K562 (cell line): ENCODE measurements at regions of chr13 and their contacts with region 1.

Region 1: DNA sequence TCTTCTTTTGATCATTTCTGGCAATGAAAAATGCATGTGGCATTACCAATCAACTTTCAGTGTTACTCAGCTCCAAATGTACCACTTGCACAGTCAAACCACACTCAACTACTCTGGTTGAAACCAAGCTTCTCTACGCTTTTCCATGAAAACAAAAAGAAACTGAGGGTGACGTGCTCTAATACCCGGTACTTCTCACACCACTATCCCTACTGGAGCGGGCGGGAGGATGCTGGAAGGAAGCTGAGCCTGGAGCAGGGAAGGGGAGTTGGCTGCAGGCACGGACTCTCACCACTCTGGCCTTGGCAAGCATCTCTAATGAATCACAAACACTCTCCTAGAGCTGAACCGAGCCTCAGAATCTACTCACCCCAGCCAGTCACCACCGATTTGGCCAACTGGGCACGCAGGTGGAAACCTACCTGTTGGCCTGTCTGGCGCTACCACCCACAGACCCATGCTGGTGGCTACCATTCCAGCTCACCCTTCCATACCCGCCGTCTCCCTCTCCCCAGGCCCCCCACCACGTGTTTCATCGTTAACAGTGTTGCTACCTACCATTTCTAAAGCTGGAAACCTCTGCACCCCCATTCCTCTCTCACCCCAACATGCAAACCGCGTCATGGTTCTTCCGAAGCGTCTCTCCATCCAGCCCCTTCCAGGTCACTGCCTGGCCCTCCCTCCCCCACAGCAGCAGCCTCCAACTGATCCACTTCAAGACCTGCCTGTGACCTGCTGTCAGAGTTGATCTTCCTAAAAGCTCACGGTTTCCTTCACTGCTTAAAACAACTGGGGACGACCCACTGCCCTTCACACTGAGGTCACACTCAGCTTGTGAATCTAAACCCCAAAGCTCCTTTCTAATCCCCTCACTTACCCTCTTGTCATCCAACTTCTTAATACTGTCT is 48.0 kb downstream of the STK24 start:
- DNase-seq: no peak
- ATAC-seq: no peak
- H3K4me3 ChIP-seq: no peak overlapping the region
- H3K27ac ChIP-seq: no peak overlapping the region
- H3K4me1 ChIP-seq: peaks cover 0 to 15% of the 10 kb centered on the region in 2 experiments; a peak in 3 of 5 replicates
- H3K27me3 ChIP-seq: no peaks in the 10 kb centered on the region
- CTCF ChIP-seq: no peak
- EP300 ChIP-seq: no peak
- POLR2A ChIP-seq: no peak
- RAD21 ChIP-seq: no peak

Region 2: DNA sequence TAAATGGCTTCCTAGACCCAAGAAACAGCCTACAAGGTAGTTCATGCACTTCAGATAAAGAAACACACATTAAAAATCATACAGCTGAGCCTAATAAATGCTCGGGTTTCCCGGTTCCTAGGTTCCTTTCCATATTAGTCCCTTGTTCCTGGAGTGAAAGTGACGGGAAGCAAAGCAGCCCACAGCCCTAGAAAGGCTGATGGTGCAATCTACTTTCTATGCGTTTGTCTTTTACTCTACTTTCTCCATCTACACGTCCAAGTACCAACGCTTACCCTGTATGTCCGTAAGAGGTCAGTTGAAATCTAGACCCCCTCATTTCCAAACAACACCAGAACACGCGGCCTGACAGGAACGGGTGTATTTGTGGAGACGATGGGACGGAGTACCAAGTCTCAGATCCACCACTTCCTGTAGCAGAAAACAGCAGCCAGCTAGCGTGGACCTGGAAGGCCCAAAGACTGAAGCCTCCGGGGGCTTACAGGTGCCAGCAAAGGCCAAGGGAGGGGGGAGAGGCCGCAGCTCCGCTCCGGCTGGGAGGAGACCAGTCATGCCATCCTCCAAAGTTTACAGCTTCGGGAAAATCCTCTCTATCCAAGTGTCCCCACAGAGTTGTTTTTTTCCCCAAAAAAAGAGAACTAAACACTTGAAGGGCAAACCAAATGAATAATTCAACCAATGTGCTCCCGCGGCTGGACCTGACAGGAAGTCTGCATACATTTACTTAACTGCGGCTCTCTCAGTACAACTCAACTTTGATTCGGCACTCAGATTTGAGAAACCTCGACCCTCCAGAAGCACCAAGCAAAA is 13.9 kb after region 1 on chr13:
- CTCF ChIA-PET with region 1: no interaction called
- POLR2A ChIA-PET with region 1: interaction called, 13 read pairs
- in situ Hi-C with region 1: no loop called
- intact Hi-C with region 1: no loop called
- DNase-seq: no peak
- ATAC-seq: no peak
- H3K4me3 ChIP-seq: no peak overlapping the region
- H3K27ac ChIP-seq: no peak overlapping the region
- H3K4me1 ChIP-seq: peaks cover 10 to 29% of the 10 kb centered on the region in 2 experiments
- H3K27me3 ChIP-seq: no peaks in the 10 kb centered on the region
- CTCF ChIP-seq: no peak
- EP300 ChIP-seq: no peak
- POLR2A ChIP-seq: no peak
- RAD21 ChIP-seq: no peak

Region 3: GRCh38 chr13:99087096-99087953 is 558.4 kb after region 1 on chr13:
- CTCF ChIA-PET with region 1: no interaction called
- POLR2A ChIA-PET with region 1: no interaction called
- in situ Hi-C with region 1: no loop called
- intact Hi-C with region 1: no loop called
- DNase-seq: peak; percentile 90 to 96 (median 91)
- ATAC-seq: peak; percentile 95
- H3K4me3 ChIP-seq: peak overlapping the region; percentile 80
- H3K27ac ChIP-seq: peak overlapping the region; percentile 72
- H3K4me1 ChIP-seq: peaks cover 20 to 25% of the 10 kb centered on the region in 2 experiments; a peak in 4 of 5 replicates
- H3K27me3 ChIP-seq: no peaks in the 10 kb centered on the region
- CTCF ChIP-seq: 0 out of 6 replicates have a peak, but pooled peaks of 1 of the 3 experiments have one; percentile 2
- EP300 ChIP-seq: no peak
- POLR2A ChIP-seq: peak; percentile 74
- RAD21 ChIP-seq: no peak